WTC11 (cell line): ENCODE measurements at regions of chr9 and their contacts with region 1.

Region 1: DNA sequence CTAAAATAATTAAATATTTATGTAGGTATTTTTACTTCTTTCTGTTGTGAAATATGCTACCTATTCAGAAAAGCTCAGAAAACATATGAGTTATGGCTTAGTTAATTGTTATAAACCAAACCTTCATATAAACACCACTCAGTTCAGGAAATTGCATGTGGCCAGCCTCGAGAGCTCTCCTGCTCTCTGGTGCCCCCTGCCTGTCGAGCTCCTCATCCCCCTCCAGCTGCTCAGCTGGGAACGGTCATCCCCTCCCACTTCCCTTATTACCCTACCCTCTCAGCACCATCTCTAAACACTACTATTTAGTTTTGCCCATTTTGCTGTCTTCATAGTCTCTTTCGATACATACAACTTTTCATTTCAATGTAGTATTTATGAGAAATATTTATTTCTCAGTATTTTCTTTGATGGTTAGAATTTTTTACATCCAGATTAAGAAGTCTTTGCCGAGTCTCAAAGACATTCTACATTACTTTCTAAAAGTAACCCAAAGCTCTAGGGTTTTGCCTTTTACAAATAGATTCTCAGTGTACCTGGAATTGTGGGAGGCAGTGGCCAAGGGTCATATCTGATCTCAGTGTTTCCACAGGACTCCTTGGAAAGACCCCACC is 51.2 kb upstream of the SEMA4D start:
- DNase-seq: peak; percentile 82
- ATAC-seq: peak; percentile 73
- H3K4me3 Mint-ChIP-seq: no peak overlapping the region
- H3K27ac Mint-ChIP-seq: no peak overlapping the region
- H3K4me1 Mint-ChIP-seq: peaks cover 34% of the 10 kb centered on the region
- H3K27me3 Mint-ChIP-seq: peaks cover 3% of the 10 kb centered on the region; the same call in 1 of the 2 replicates
- CTCF ChIP-seq: peak; percentile 84

Region 2: GRCh38 chr9:89375191-89375760 is 173.9 kb before region 1 on chr9:
- CTCF ChIA-PET with region 1: interaction called, 13 read pairs
- POLR2A ChIA-PET with region 1: no interaction called
- DNase-seq: no peak
- ATAC-seq: peak; percentile 29
- H3K4me3 Mint-ChIP-seq: no peak overlapping the region
- H3K27ac Mint-ChIP-seq: peak overlapping the region; percentile 87; the same call in 1 of the 2 replicates
- H3K4me1 Mint-ChIP-seq: peaks cover 6% of the 10 kb centered on the region
- H3K27me3 Mint-ChIP-seq: no peaks in the 10 kb centered on the region
- CTCF ChIP-seq: no peak

Region 3: DNA sequence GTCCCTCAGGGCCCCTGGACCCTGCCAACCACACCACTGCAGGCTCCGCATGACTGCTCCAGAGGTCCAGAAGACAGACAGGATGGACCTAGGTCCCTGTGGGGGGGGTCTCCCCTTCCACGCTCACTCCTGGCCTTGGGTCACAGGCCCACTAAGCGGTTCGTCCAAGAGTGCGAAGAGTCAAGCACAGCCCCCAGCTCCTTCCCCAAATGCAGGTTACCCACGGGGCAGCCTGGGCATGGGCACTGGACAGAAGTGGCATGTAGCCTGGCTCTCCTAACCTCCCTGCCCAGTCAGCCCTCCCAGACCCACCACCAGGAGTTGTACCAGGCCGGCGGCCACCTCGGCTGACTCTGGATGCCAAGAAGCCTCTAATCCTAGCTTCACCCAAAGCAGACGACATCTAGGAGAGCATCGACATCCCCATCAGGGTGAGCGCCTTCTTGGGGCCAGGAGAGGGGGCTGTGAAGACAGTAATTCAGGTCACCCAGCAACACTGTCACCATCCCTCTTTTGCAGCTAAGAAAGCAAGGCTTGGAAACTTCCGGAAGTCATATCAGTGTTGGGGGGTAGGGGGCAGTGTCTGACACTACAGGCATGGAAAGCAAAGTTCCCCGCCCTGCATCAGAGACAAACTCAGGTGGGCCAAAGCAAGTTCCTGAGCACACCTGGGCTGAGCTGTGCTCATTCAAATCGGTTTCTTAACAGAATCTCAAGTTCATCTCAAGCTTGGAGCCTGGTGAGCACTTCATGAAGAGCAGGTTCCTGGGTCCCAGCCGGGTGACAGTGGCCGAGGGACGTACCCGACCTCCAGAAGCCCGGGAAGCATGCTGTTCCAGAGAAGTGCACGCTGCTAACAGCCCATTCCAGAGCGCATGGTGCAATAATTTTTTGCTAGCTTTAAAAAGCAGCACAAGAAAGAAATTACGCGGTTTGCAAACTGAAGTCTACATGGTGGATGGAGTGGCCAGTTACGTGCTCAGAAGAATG is 119.9 kb before region 1 on chr9:
- CTCF ChIA-PET with region 1: interaction called, 135 read pairs
- POLR2A ChIA-PET with region 1: interaction called, 3 read pairs
- DNase-seq: peak; percentile 75
- ATAC-seq: peak; percentile 86
- H3K4me3 Mint-ChIP-seq: 0 out of 2 replicates have a peak overlapping the region, but pooled peaks have one; percentile 14
- H3K27ac Mint-ChIP-seq: peak overlapping the region; percentile 92
- H3K4me1 Mint-ChIP-seq: peaks cover 58% of the 10 kb centered on the region
- H3K27me3 Mint-ChIP-seq: no peaks in the 10 kb centered on the region
- CTCF ChIP-seq: peak; percentile 42

Region 4: GRCh38 chr9:89449261-89449671 is 99.9 kb before region 1 on chr9:
- CTCF ChIA-PET with region 1: interaction called, 11 read pairs
- POLR2A ChIA-PET with region 1: no interaction called
- DNase-seq: no peak
- ATAC-seq: no peak
- H3K4me3 Mint-ChIP-seq: no peak overlapping the region
- H3K27ac Mint-ChIP-seq: peak overlapping the region; percentile 75; the same call in 1 of the 2 replicates
- H3K4me1 Mint-ChIP-seq: peaks cover 19% of the 10 kb centered on the region
- H3K27me3 Mint-ChIP-seq: no peaks in the 10 kb centered on the region; the same call in 1 of the 2 replicates
- CTCF ChIP-seq: no peak

Region 5: GRCh38 chr9:89483592-89484522 is 65.3 kb before region 1 on chr9:
- CTCF ChIA-PET with region 1: interaction called, 12 read pairs
- POLR2A ChIA-PET with region 1: no interaction called
- DNase-seq: no peak
- ATAC-seq: no peak
- H3K4me3 Mint-ChIP-seq: no peak overlapping the region
- H3K27ac Mint-ChIP-seq: peak overlapping the region; percentile 67
- H3K4me1 Mint-ChIP-seq: peaks cover 53% of the 10 kb centered on the region
- H3K27me3 Mint-ChIP-seq: no peaks in the 10 kb centered on the region
- CTCF ChIP-seq: no peak

Region 6: GRCh38 chr9:89515416-89515815 is 33.7 kb before region 1 on chr9:
- CTCF ChIA-PET with region 1: no interaction called
- POLR2A ChIA-PET with region 1: no interaction called
- DNase-seq: no peak
- ATAC-seq: no peak
- H3K4me3 Mint-ChIP-seq: no peak overlapping the region
- H3K27ac Mint-ChIP-seq: no peak overlapping the region
- H3K4me1 Mint-ChIP-seq: no peaks in the 10 kb centered on the region
- H3K27me3 Mint-ChIP-seq: no peaks in the 10 kb centered on the region
- CTCF ChIP-seq: no peak

Region 7: DNA sequence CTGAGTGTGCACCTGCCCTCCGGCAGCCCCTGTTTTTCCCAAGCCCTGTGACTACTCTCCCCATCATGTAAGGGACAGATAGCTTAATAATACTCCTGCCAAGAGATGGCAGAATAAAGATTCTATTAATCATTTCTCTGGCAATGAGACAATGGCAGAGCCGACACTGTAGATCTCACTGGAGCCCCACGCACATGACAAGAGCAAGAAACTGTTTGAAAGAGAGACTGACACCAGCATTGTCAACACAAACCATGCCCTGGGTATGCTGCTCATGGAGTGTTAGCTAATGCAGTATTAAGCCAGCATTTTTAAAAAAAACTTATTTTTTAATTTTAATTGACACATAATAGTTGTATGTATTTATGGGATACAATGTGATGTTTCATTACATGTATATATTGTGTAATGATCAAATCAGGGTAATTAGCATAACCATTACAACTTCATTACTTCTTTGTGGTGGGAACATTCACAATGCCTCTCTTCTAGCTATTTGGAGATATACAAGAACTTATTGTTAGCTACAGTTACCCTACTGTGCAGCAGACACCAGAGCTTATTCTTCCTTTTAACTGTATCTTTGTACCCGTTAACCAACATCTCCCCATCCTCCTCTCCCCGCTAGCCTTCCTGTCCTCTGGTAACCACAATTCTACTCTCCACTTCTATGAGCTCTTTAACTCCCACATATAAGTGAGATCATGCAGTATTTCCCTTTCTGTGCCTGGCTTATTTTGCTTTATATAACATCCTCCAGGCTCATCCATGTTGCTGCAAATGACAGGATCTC is 19.7 kb before region 1 on chr9:
- CTCF ChIA-PET with region 1: interaction called, 10 read pairs
- POLR2A ChIA-PET with region 1: no interaction called
- DNase-seq: no peak
- ATAC-seq: no peak
- H3K4me3 Mint-ChIP-seq: no peak overlapping the region
- H3K27ac Mint-ChIP-seq: no peak overlapping the region
- H3K4me1 Mint-ChIP-seq: peaks cover 3% of the 10 kb centered on the region
- H3K27me3 Mint-ChIP-seq: no peaks in the 10 kb centered on the region
- CTCF ChIP-seq: no peak

Region 8: DNA sequence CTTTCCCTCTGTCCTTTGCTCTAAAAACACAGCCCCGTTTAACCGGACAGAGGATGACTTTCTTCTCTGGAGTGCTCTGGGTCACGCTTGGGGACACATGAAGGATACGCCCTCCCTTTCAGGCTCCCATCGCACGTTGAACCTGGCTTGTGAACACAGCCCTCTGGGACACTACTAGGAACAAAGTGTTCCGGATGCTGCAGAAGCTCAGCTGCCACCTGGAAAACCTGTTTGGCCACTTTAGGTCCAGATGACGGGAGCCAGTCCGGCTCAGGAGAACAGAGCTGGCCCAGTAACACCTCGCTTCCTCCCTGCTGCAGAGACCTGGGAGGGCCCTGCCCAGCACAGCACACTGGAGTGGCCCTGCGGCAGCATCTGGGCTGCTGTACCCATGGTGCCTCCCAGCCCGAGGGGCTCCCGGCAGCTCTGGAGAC is 115.8 kb after region 1 on chr9:
- CTCF ChIA-PET with region 1: no interaction called
- POLR2A ChIA-PET with region 1: no interaction called
- DNase-seq: no peak
- ATAC-seq: 0 out of 2 replicates have a peak, but pooled peaks have one; percentile 3
- H3K4me3 Mint-ChIP-seq: no peak overlapping the region
- H3K27ac Mint-ChIP-seq: no peak overlapping the region
- H3K4me1 Mint-ChIP-seq: peaks cover 58% of the 10 kb centered on the region
- H3K27me3 Mint-ChIP-seq: no peaks in the 10 kb centered on the region
- CTCF ChIP-seq: no peak